ENCODE measurements at regions of chr1 and their contacts with region 1.

Region 1: DNA sequence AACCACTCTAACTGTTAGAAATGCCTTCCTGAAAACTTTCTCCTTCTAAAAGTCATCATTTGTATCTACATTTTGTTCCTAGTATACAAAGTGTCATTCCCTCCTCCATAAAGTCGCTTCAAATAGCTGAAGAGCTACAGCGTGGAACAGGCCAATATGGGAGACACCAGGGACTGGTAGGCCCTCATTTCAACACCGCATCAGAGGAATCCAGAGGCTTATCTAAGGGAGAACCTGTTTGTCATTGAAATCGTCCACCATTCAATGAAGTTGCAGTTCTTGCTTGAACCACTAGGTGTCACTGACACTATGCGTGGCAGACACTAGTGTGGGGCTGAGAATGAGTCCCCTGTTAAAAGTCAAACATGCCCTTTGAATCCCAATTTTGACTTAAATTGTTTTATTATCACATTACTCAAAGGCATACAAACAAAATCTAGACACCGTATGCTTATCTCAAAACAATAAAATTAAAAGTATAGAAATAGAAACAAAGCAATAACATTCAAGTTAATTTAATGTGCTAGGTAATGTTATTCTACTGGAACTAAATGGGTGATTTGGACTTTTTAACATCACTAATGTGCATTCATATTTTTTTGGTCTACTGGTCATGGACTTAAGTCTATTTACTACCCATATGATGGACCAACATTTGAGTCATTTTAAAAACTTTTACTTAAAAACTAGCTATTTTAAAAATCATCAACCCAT is 182.3 kb downstream of the FCRL5 start:
- DNase-seq: peak; percentile 33
- ATAC-seq: peak; percentile 96
- H3K4me3 ChIP-seq: no peak overlapping the region
- H3K27ac ChIP-seq: no peak overlapping the region
- H3K4me1 ChIP-seq: no peaks in the 10 kb centered on the region
- H3K27me3 ChIP-seq: 0 out of 2 replicates have a peak, but pooled peaks cover under 1% of the 10 kb centered on the region
- CTCF ChIP-seq: peak; percentile 73 to 88 (median 83)
- POLR2A ChIP-seq: no peak
- RAD21 ChIP-seq: peak; percentile 75

Region 2: GRCh38 chr1:157193702-157194391 is 176.1 kb before region 1 on chr1:
- CTCF ChIA-PET with region 1: no interaction called
- POLR2A ChIA-PET with region 1: no interaction called
- RAD21 ChIA-PET with region 1: no interaction called
- intact Hi-C with region 1: loop called (anchors 5 kb)
- DNase-seq: peak; percentile 57
- ATAC-seq: peak; percentile 75
- H3K4me3 ChIP-seq: no peak overlapping the region
- H3K27ac ChIP-seq: no peak overlapping the region
- H3K4me1 ChIP-seq: peaks cover 0 to 5% of the 10 kb centered on the region in 2 experiments; a peak in 1 of 4 replicates
- H3K27me3 ChIP-seq: no peaks in the 10 kb centered on the region
- CTCF ChIP-seq: peak; percentile 67 to 84 (median 75); a peak in 5 of 6 replicates
- POLR2A ChIP-seq: no peak
- RAD21 ChIP-seq: peak; percentile 62

Region 3: GRCh38 chr1:158485455-158485854 is 1115.5 kb after region 1 on chr1:
- CTCF ChIA-PET with region 1: no interaction called
- POLR2A ChIA-PET with region 1: no interaction called
- RAD21 ChIA-PET with region 1: no interaction called
- intact Hi-C with region 1: no loop called
- DNase-seq: no peak
- ATAC-seq: no peak
- H3K4me3 ChIP-seq: no peak overlapping the region
- H3K27ac ChIP-seq: no peak overlapping the region
- H3K4me1 ChIP-seq: no peaks in the 10 kb centered on the region
- H3K27me3 ChIP-seq: no peaks in the 10 kb centered on the region
- CTCF ChIP-seq: no peak
- POLR2A ChIP-seq: no peak
- RAD21 ChIP-seq: no peak

Measured in HCT116 (cell line).